ENCODE measurements at regions of chr6 and their contacts with region 1.

Region 1: GRCh38 chr6:135897087-135897486 is 45.6 kb downstream of the PDE7B start:
- DNase-seq: no peak
- ATAC-seq: no peak
- H3K4me3 Mint-ChIP-seq: no peak overlapping the region
- H3K27ac Mint-ChIP-seq: no peak overlapping the region
- H3K4me1 Mint-ChIP-seq: peaks cover 28% of the 10 kb centered on the region
- H3K27me3 Mint-ChIP-seq: no peaks in the 10 kb centered on the region

Region 2: DNA sequence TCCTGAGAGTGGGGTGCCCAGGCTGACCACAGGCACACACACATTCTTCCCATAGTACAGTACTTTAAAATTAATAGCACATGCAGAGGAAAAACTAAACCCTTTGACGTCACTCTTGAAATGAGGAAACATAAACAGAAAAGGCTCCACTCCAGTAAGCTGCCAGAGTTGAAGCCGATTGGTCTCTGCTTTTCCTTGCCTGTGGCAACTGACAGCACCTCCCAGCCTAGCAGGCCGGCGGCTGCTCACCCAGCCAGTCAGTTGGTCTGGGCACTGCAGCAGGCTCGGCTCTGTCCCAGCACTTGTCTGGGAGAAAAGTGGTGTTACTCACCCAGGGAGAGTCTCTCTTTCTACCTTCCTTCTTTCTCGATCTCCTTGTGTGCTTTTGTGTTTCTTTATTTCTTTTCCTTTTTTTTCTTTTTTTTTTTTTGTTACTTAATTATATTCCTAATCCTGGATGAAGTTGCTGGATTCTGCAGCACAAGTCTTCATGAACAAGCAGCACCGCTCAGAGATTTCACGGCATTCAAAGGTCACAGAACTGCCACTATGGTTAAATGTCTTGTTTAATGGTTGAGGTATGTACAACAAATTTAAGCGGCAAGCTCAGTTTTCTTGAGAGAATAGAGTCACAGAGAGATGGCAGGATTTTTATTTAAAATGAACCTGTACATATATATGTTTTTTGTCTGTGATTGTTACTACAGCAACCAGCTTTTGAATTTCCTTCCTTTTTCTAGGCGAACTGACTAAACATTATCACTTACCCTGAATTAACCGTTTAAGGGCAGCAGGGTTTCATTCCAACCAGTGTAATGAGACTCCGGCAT is 45.4 kb before region 1 on chr6 and contains the start of gene PDE7B:
- CTCF ChIA-PET with region 1: interaction called, 3 read pairs
- POLR2A ChIA-PET with region 1: interaction called, 3 read pairs
- intact Hi-C with region 1: loop called in 1 of 2 experiments (anchors 1 kb)
- DNase-seq: peak; percentile 73
- ATAC-seq: peak; percentile 91
- H3K4me3 Mint-ChIP-seq: peak within 1 kb of the TSS; percentile 66
- H3K27ac Mint-ChIP-seq: peak within 1 kb of the TSS; percentile 56
- H3K4me1 Mint-ChIP-seq: peaks cover 31% of the 10 kb centered on the region
- H3K27me3 Mint-ChIP-seq: no peaks in the 10 kb centered on the region
- total RNA-seq, gene PDE7B: 0.73 to 1.1 TPM